ENCODE measurements at regions of chr1 and their contacts with region 1.

Region 1: DNA sequence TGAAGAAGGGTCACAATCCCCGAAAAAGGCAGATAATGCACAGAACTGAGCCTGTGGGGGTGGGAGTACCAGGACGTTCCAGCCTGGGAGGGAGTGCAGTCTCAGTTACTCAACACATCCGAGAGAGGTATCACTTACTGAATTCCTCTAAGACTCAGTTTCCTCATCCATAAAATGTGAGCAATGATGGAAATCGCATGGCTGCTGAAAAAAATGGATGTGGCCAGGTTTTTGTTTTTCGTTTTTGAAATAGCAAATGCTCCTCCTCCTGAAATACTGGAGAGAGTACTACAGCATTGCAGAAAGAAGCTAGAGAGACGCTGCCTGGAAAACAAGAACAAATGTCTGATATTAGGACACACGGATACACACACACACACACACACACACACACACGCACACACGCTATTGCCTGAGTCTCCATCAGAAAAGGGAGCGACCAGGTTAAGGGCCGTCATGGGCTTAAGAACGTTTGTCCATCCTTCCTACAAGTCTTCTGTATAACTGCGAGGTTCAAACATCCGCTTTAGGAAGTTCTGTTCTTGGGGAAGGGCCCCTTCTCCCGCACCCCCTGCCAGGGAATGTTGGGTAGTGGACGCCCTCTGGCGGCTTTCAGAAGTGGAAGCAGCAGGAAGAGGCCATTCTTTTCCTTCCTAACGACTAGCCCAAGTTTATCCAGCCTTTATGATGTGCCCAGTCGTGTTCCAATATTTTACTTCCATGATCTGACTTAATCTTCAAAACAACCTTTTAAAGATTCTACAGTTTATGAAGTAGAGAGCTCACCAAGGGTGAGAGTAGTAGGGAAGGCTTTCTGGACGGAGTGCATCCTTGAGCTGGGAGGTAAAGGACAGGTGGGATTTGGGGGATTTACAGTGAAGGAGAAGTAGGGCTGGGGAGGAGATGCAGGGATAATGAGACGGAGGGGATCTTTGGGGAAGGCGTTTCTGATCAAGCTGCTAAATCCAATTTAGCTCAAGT is 699 bp upstream of the NES start:
- DNase-seq: no peak
- H3K4me3 ChIP-seq: peak overlapping the region; percentile 39
- CTCF ChIP-seq: peak; percentile 92

Region 2: DNA sequence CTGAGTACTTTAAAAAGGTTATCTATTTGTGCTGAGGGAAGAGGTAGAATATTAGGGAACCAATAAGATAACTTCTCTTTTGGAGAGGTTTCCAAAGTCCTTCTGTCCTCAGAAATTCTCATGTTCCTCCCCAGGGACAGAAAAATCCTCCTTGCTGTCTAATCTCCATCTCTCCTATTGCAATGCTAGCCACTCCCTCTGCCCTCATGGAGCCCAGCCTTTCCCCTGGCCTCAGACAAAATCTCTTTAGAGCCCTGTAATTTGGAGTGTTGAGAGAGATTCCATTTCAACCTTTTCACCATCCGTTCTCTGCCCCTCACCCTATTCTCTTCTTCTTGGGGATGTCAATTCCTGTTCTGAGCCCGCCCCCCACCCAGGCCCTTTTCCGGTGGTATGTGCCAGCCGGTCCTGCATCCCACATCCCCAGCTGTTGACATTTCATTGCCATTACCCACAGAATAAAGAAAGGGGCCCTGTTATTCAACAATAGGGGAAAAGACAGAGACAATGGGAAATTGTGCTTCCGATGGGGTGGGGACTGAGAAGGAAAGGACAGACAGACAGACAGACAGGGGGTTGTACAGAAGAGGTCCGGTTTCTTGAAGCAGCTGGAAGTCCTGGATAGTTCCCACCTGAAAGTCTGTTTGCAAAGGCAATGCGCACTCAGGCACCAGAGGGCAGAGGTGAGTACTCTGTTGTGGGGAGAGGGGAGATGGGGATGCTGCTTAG is 58.9 kb before region 1 on chr1 and contains the start of gene HAPLN2:
- CTCF ChIA-PET with region 1: interaction called, 341 read pairs
- POLR2A ChIA-PET with region 1: no interaction called
- DNase-seq: no peak
- H3K4me3 ChIP-seq: no peak within 1 kb of the TSS
- CTCF ChIP-seq: peak; percentile 45

Region 3: GRCh38 chr1:156652131-156652991 is 25.5 kb before region 1 on chr1:
- CTCF ChIA-PET with region 1: interaction called, 506 read pairs
- POLR2A ChIA-PET with region 1: no interaction called
- DNase-seq: no peak
- H3K4me3 ChIP-seq: no peak overlapping the region
- CTCF ChIP-seq: no peak

Measured in AG04449 (cell line).